Activated CD4-positive, alpha-beta memory T cell treated with anti-CD3 and anti-CD28 coated beads for 36 hours (primary cell): ENCODE measurements at regions of chr17 and their contacts with region 1.

Region 1: DNA sequence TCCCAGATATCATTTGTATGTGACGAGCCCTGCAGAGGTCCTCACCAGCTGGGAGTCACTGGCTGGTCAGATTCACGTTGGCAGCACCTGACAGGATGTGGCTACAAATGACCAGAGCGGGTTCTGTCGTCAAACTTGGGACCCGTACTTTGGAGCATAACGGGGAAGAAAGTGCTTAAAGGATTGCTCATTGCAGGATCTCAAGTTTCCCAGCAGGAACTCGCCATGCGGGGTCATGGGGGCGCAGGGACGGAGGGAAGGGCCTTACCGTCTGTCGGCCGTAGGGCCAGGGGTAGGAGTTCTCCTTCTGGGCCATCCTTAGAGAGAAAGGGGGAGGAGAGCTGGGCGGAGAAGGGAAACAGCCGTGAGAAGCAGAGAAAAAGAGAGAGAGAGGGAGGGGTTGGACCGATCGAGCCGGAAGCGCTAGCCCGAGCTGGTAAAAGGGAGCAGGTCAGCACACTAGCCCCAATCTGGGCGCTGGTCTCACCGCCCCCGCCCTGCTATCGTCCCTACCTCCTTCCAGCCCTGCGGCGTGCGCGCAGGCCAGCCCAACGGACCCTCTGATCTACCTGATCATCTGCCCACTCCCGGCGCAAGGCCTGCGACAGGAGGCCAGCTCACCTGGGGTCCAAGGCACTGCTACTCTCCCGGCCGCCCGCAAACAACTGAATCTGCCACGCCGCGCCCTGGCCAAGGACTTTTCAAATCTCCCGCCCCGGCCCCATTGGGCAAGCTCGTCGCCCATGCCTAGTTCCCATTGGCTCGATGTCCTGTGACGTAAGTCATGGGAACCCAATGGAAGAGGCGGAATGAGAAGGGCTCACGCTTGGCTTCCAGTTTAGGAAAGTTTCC is at the start of gene AURKB:
- DNase-seq: peak; percentile 96
- H3K4me3 Mint-ChIP-seq: peak within 1 kb of the TSS; percentile 99
- H3K27ac Mint-ChIP-seq: peak within 1 kb of the TSS; percentile 97
- H3K4me1 Mint-ChIP-seq: peaks cover 23% of the 10 kb centered on the region
- H3K27me3 Mint-ChIP-seq: no peaks in the 10 kb centered on the region
- total RNA-seq, gene AURKB: 184 TPM

Region 2: DNA sequence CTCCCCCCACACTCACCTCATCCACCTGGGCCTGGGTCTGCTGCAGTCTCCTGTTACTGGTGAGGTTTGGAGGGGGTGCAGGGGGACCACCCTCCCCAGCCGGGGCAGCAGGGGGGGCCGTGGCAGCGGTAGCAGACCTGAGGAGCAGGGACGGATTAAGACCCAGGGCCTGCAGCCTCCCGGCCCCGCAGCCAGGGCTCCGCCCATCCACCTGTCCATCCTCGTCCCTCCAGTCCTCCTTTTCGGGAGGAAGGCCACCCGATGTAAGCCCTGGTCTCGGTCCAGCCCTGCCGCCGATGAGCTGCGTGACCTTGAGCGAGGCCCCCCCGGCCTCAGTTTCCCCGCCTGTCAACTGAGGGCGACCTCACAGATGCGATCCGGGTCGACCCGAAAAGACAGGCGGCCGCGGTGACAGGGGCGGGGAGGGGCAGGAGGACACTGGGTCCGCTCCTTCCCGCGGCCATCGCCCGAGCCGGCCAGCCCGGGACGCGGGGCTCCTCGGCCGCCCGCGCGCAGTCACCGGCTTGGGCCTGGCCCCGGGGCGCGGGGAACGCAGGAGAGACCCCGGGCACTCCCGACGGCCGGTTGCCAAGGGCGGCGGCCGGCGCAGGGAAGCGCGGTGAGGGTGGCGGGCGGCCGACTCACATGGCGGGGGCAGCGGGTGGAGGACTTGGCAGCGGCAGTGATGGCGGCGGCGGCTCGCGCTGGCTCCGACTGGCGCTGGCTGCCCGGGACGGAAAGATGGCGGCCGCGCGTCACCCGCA is 47.7 kb before region 1 on chr17 and contains the start of gene VAMP2:
- CTCF ChIA-PET with region 1: no interaction called
- POLR2A ChIA-PET with region 1: interaction called, 4 read pairs
- intact Hi-C with region 1: loop called (anchors 1 kb)
- DNase-seq: peak; percentile 88
- H3K4me3 Mint-ChIP-seq: peak within 1 kb of the TSS; percentile 86
- H3K27ac Mint-ChIP-seq: peak within 1 kb of the TSS; percentile 95
- H3K4me1 Mint-ChIP-seq: peaks cover 52% of the 10 kb centered on the region
- H3K27me3 Mint-ChIP-seq: no peaks in the 10 kb centered on the region
- total RNA-seq, gene VAMP2: 30.1 to 30.4 TPM